ENCODE measurements at regions of chr1 and their contacts with region 1.

Region 1: GRCh38 chr1:154955718-154956543 is at the start of gene PBXIP1:
- DNase-seq: no peak
- H3K4me3 ChIP-seq: peak within 1 kb of the TSS; percentile 84
- H3K27ac ChIP-seq: peak within 1 kb of the TSS; percentile 88
- H3K27me3 ChIP-seq: no peaks in the 10 kb centered on the region
- CTCF ChIP-seq: peak; percentile 52
- polyA plus RNA-seq, gene PBXIP1: 72.2 and 87.1 TPM in 2 replicates

Region 2: GRCh38 chr1:154698320-154699096 is 257.4 kb before region 1 on chr1:
- CTCF ChIA-PET with region 1: no interaction called
- POLR2A ChIA-PET with region 1: no interaction called
- DNase-seq: no peak
- H3K4me3 ChIP-seq: no peak overlapping the region
- H3K27ac ChIP-seq: no peak overlapping the region
- H3K27me3 ChIP-seq: peaks cover 5% of the 10 kb centered on the region
- CTCF ChIP-seq: no peak

Region 3: GRCh38 chr1:154837672-154838171 is 118.2 kb before region 1 on chr1:
- CTCF ChIA-PET with region 1: no interaction called
- POLR2A ChIA-PET with region 1: no interaction called
- DNase-seq: no peak
- H3K4me3 ChIP-seq: no peak overlapping the region
- H3K27ac ChIP-seq: no peak overlapping the region
- H3K27me3 ChIP-seq: peaks cover 40% of the 10 kb centered on the region
- CTCF ChIP-seq: no peak

Region 4: GRCh38 chr1:154943649-154944400 is 12.1 kb before region 1 on chr1:
- CTCF ChIA-PET with region 1: interaction called, 11 read pairs
- POLR2A ChIA-PET with region 1: no interaction called
- DNase-seq: no peak
- H3K4me3 ChIP-seq: no peak overlapping the region
- H3K27ac ChIP-seq: no peak overlapping the region
- H3K27me3 ChIP-seq: peaks cover 2% of the 10 kb centered on the region
- CTCF ChIP-seq: peak; percentile 86

Region 5: DNA sequence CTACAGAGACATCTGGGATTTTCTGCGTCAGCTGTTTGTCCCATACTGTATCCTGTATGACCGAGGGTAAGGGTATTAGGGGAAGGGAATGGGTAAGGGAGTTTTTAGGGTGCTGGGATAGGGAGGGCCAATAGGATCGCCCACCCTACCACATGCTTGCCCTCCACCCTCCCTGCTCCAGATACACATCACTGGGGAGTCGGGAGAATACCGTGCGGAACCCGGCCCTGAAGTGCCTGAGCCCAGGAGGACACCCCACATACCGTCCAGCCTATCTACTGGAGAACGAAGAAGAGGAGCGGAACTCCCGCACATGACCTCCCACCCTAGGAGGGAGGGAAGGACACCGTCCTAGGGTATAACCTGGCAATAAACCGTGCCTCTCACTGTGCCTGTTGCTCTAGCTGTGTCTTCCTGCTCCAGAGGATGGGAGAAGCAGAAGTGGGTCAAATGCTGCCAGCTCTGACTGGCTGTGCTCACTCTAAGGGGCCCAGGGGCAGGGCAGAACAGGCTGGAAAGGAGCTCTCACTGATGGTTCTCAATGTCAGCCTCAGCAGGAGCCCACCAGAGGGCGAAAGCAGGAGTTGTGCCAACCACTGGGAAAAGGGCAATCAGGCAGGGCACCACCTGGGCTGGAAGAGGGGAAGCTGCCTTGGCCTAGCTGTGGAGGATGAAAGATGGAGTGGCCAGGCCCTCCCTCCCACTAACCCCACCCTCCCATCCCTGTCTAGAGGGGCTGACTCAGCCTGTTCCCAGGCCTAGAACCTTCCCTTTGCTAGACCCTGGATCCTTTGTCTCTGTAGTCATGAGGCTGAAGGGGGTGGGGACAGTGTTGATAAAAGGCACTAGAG is 37.0 kb after region 1 on chr1:
- CTCF ChIA-PET with region 1: interaction called, 28 read pairs
- POLR2A ChIA-PET with region 1: no interaction called
- DNase-seq: no peak
- H3K4me3 ChIP-seq: no peak overlapping the region
- H3K27ac ChIP-seq: peak overlapping the region; percentile 21
- H3K27me3 ChIP-seq: no peaks in the 10 kb centered on the region
- CTCF ChIP-seq: peak; percentile 20; the same call in 1 of the 2 replicates

Region 6: GRCh38 chr1:155000726-155001424 is 44.9 kb after region 1 on chr1:
- CTCF ChIA-PET with region 1: interaction called, 28 read pairs
- POLR2A ChIA-PET with region 1: interaction called, 4 read pairs
- DNase-seq: peak; percentile 52
- H3K4me3 ChIP-seq: peak overlapping the region; percentile 76
- H3K27ac ChIP-seq: peak overlapping the region; percentile 84
- H3K27me3 ChIP-seq: no peaks in the 10 kb centered on the region
- CTCF ChIP-seq: no peak; the same call in none of the 2 replicates